A673 (cell line): ENCODE measurements at regions of chr9 and their contacts with region 1.

Region 1: DNA sequence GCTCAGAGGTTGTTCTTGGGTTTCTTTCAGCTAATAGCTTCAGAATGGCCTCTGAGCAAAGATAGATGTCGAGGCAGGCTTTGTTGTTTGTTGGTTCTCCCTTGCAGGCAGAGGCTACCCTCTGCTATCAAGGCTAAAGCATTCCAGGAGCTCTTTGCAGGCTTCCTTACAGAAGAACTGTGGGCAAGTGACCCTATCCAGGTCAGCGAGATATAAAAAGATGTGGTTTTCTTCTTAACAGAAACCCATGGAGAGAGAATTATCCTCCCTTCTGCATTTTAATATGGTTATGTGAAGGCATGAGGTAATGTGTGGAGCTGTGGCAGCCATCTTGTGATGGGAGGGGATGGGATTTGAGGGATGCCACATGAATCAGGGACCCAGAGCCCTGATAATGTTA is 67.0 kb downstream of the TLE4 start:
- DNase-seq: no peak
- H3K4me3 ChIP-seq: no peak overlapping the region
- H3K27ac ChIP-seq: no peak overlapping the region
- H3K4me1 ChIP-seq: no peaks in the 10 kb centered on the region
- H3K27me3 ChIP-seq: no peaks in the 10 kb centered on the region
- CTCF ChIP-seq: no peak

Region 2: GRCh38 chr9:80049096-80049782 is 410.4 kb after region 1 on chr9:
- CTCF ChIA-PET with region 1: no interaction called
- POLR2A ChIA-PET with region 1: interaction called, 15 read pairs
- intact Hi-C with region 1: no loop called
- DNase-seq: no peak
- H3K4me3 ChIP-seq: no peak overlapping the region
- H3K27ac ChIP-seq: no peak overlapping the region
- H3K4me1 ChIP-seq: no peaks in the 10 kb centered on the region
- H3K27me3 ChIP-seq: no peaks in the 10 kb centered on the region
- CTCF ChIP-seq: no peak